ENCODE measurements at regions of chr14 and their contacts with region 1.

Region 1: GRCh38 chr14:32576088-32576795 is 247.1 kb downstream of the AKAP6 start:
- DNase-seq: peak in 4 of 5 donors; percentile 25 to 84 (median 54)
- H3K4me3 ChIP-seq: no peak overlapping the region
- H3K27ac ChIP-seq: no peak overlapping the region
- H3K4me1 ChIP-seq: no peaks in the 10 kb centered on the region
- H3K27me3 ChIP-seq: no peaks in the 10 kb centered on the region
- CTCF ChIP-seq: peak; percentile 93

Region 2: DNA sequence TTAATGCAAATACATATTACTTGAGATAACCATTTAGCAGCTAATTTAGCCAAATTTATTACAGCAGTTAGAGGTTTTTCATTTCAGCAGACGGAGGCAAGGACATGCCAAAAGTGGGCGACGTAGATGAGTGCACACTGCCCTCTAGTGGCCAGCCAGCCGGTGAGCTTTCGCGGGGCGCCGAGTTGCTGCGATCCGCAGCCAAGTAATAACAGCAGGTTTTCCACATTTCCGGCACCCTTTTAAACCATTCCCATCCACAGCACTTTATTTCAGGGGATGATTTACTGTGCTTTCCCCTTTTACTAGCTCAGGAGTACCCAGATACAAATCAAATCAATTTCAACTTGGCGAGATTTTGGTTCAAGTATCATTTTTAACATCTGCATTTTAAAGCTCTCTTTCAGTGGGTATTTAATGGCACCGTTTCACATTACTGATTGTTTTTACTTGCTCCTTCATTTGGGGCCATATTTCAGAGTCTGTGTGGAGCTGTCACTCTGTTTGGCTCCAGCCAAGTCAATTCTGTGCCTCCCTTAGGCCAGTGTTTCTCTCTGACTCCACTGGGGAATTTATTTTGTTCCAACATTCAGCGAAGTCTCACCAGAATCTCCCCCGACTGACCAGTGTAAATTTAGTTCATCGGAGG is 1216.6 kb after region 1 on chr14:
- intact Hi-C with region 1: loop called (anchors 10 kb)
- DNase-seq: peak; percentile 91 to 95 (median 93)
- H3K4me3 ChIP-seq: peak overlapping the region in 2 of 3 donors; percentile 36 to 57
- H3K27ac ChIP-seq: no peak overlapping the region
- H3K4me1 ChIP-seq: peaks cover 0 to 3% (median 2%) of the 10 kb centered on the region in 3 donors
- H3K27me3 ChIP-seq: no peaks in the 10 kb centered on the region
- CTCF ChIP-seq: peak; percentile 95

Measured in kidney (tissue), 22 donors.